Heart left ventricle (tissue), 16 donors: ENCODE measurements at regions of chr7 and their contacts with region 1.

Region 1: DNA sequence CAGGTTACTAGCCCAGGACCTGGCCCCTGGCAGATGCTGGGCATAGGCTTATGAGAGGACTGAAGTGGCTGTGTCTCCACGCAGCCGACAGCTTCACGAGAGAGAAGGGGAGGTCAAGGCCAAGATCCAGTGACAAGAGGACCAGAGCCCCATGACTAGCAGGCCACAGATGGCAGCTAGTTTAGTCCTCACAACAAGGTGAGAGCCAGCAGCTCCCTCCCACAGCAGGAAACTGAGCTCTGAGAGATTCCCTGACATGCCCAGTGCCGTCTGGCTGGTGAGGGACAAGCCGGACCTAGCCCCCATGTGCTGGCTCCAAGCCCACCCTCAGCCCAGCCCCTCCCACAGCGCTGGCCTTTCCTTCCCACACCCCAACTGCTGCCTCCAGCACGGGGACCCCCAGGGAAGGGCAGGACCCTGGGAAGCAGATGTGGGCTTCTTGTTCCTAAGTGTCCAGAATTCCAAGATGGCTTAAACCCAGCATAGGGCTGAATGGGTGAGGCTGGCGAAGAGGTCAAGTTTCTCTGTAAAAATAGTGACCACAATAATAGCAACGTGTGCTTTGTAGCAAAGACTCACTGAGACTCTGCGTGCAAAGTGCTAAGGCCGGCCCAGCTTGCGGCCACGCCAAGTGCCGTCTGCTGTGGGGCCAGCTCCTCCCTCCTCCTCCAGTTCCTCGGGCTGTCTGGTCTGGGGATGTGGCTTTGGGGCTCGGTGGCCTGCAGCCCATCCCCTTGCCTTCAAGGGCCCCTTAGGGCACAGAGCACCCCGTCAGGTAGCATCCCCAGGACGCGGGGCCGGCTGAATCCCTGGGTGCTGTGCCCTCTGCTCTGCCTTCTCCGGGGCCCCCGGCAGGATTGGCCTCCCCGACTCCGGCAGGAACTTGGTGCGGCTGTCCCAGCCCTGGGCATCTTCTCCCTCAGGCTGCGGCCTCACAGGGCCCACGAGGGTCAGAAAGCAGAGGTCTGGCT is 7.8 kb upstream of the FAM20C start:
- DNase-seq: peak in 1 of 5 donors; percentile 63
- ATAC-seq: peak in 3 of 4 donors; percentile 39 to 70 (median 41)
- H3K4me3 ChIP-seq: no peak overlapping the region
- H3K27ac ChIP-seq: peak overlapping the region in 1 of 12 donors; percentile 20
- H3K4me1 ChIP-seq: peaks cover 0 to 13% (median 4%) of the 10 kb centered on the region in 12 donors
- H3K27me3 ChIP-seq: no peaks in the 10 kb centered on the region
- CTCF ChIP-seq: no peak
- POLR2A ChIP-seq: no peak

Region 2: GRCh38 chr7:148932-149855 is 35.4 kb before region 1 on chr7:
- intact Hi-C with region 1: loop called in 2 of 10 experiments (anchors 5 kb)
- DNase-seq: peak; percentile 98 to 99 (median 98)
- ATAC-seq: peak; percentile 94 to 98 (median 97)
- H3K4me3 ChIP-seq: peak overlapping the region; percentile 37 to 76 (median 60)
- H3K27ac ChIP-seq: peak overlapping the region; percentile 86 to 99 (median 94)
- H3K4me1 ChIP-seq: peaks cover 0 to 27% (median 14%) of the 10 kb centered on the region in 12 donors
- H3K27me3 ChIP-seq: no peaks in the 10 kb centered on the region
- CTCF ChIP-seq: peak in 2 of 12 donors; percentile 1 to 13
- POLR2A ChIP-seq: peak in 1 of 2 donors; percentile 67

Region 3: GRCh38 chr7:1357601-1358271 is 1173.2 kb after region 1 on chr7:
- intact Hi-C with region 1: no loop called
- DNase-seq: peak in 2 of 5 donors; percentile 12 to 40
- ATAC-seq: no peak
- H3K4me3 ChIP-seq: no peak overlapping the region
- H3K27ac ChIP-seq: no peak overlapping the region
- H3K4me1 ChIP-seq: no peaks in the 10 kb centered on the region
- H3K27me3 ChIP-seq: peaks cover 6 to 41% (median 22%) of the 10 kb centered on the region in 9 donors
- CTCF ChIP-seq: no peak
- POLR2A ChIP-seq: no peak